GM10248 (cell line): ENCODE measurements at regions of chr10 and their contacts with region 1.

Region 1: DNA sequence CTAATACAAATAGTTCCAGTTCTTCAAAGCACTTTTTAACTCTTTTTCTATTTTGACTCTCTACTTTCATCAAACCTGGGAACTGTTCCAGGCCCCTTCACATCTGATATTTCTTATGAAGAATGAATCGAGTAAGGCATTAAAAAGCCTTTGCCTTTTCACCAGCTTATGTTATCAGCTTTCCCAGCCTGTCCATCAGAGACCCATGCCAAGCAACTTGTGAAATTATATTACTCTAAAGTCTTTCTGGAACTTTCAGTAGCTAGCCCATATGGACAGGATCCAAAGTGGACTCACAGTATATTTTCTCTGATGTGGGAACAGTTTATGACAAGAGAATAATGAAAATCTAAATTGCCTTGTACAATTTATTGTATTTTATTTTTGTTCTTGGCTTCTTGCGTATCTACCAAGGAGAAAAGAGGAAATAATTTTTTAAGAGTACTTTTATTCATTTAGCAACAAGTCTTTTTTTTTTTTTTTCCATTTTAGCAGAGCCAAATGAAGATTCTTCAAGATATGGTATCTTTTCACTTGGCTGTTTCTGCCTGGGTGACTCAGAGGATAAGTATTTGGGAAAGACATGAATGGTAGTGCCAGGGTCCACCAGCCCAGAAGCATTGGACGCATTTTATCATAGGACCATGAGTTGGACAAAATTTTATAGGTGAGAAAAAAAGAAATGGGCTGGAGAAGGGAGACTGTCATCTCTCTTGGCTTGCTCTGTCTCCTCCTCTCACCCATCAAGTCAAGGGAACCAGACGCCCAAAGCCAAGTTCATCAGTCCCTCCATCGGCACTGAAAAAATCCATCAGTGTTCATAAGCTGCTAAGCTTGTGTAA is 195.8 kb upstream of the NEBL start:
- DNase-seq: no peak
- CTCF ChIP-seq: no peak

Region 2: DNA sequence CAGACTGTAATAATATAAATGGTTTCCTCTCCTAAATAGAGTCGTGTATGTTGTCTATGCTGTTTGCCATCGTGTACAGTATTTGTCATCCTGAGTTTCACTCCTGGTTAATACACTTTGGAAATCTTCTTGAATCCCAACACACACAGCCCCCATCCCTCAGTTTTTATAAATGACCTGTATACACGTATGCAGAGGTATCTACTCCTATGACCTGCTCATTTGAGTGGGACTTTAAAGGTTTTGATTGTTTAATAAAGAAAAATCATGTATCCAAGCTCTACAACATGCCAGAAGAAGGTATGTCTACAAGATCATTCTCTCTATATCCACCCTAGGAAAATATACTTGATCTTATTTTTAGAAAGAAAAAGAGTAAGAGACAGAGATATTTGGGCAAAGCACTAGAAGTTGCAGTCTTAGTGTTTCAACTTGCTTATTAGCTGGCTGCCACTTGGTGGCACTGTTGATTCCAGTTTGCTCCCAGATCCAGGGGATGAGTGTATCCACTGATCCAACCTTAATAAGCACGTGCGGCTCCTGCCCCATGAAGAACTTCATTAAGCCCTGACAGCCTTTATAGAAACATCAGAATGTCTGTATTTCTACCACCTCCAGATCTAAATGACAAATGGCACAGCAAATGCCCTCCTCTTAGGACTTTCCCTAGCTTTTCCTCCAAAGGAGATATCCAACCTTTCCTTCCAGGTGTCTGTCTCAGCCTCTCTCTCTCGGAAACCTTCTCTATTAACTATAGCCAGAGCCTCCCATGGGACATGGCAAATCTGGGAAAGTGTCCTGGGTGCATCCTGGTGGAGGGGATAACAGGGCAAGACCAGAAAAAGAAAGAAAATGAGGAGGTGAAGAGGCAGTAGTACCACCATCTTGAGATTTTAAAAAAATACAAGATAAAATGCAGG is 14.2 kb before region 1 on chr10:
- CTCF ChIA-PET with region 1: interaction called, 14 read pairs
- POLR2A ChIA-PET with region 1: no interaction called
- DNase-seq: peak; percentile 25
- CTCF ChIP-seq: peak; percentile 76